RWPE1 (cell line): ENCODE measurements at regions of chr3 and their contacts with region 1.

Region 1: DNA sequence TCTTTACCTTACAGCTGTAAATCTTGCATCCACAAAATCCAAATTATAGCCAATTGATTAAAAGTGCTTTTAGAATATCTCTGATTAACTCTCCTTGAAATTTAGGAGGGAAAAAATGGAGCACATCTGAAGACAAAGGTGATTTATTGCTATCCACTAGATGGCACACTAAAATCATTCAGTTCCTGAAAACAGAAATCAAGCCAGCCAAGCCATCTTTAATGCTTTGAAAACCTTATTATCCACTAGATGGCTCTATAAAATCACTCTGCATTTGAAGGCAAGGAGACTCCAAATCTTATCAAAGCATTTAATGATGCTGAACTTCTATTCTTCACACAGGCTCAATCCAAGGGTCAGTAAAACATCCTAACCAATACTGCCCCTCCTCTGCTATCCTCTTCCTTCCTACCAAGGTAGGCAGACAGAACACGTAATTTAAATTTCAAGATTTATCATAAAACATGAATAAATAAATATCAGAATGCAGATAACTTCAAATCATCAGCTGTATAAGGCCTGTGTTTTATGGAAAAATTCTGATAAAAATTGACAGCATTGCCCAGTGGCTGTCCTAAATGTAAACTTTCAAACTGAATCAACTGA is 48.4 kb downstream of the GOLIM4 start:
- DNase-seq: peak; percentile 62
- H3K27ac ChIP-seq: no peak overlapping the region
- CTCF ChIP-seq: peak; percentile 92

Region 2: DNA sequence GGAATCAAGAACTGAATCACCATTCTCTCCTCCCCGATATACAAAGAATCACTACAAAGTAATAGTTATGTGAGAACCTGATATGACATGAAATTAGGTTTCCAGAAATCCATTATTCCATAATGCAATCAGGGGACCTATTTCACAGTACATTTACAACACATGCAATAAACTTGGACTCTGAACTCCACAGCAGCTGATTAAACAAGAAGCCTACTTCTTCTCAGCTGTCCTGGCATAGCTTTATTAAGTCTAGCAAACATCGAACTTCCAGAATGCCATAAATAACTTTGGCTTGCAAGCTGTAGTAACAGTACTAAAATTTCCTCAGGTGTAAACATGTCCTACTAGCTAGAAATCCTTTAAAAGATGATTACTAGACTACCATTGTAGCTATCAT is 330.4 kb before region 1 on chr3:
- CTCF ChIA-PET with region 1: no interaction called
- POLR2A ChIA-PET with region 1: no interaction called
- DNase-seq: no peak
- H3K27ac ChIP-seq: no peak overlapping the region
- CTCF ChIP-seq: no peak

Region 3: GRCh38 chr3:168124791-168125190 is 77.5 kb after region 1 on chr3:
- CTCF ChIA-PET with region 1: no interaction called
- POLR2A ChIA-PET with region 1: no interaction called
- DNase-seq: no peak
- H3K27ac ChIP-seq: no peak overlapping the region
- CTCF ChIP-seq: no peak

Region 4: GRCh38 chr3:168165390-168166269 is 118.3 kb after region 1 on chr3:
- CTCF ChIA-PET with region 1: interaction called, 35 read pairs
- POLR2A ChIA-PET with region 1: no interaction called
- DNase-seq: peak; percentile 61
- H3K27ac ChIP-seq: no peak overlapping the region
- CTCF ChIP-seq: peak; percentile 79